PC-3 (cell line): ENCODE measurements at regions of chr2 and their contacts with region 1.

Region 1: DNA sequence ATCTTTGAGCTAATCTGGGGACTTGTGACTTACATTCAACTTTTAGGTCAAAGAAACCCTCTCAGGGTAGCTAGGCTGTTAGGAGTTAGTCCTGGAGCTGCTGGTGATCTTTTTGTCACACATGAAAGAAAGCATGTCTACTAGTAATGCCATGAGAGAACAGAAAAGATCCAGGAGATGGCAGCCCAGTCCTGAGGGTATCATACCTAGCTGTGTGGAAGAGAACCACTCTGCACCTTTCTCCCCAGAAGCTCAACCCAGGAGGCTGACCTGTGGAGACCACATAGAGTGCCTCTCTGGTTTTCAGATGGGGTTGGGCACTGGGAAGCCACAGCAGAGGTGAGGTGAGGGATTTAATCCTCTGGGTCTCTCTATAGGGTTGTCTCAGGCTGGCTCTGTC is 460.2 kb upstream of the UBE2E3 start:
- DNase-seq: peak; percentile 56
- ATAC-seq: peak; percentile 32
- H3K4me3 ChIP-seq: no peak overlapping the region
- H3K27ac ChIP-seq: peak overlapping the region; percentile 96
- H3K4me1 ChIP-seq: peaks cover 73% of the 10 kb centered on the region
- H3K27me3 ChIP-seq: no peaks in the 10 kb centered on the region
- CTCF ChIP-seq: peak; percentile 52

Region 2: DNA sequence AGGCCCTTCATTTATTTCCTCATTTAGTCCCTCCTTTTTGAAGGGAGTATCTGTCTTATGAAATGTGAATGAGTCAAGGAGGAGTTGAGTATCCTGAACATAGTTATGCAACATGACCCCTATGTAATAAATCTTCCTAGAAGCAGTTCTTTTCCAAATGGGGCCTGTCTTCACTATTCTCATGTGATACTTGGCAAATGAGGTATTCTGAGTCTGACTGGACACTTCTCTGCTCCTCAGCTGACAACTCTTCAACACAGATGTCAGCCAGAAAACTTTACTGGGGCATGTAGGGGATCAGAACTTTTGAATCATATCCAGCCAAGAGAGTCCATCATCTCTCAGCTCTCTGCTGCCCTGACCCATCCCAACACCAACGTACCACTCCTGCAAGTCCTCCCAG is 950.4 kb before region 1 on chr2:
- CTCF ChIA-PET with region 1: no interaction called
- POLR2A ChIA-PET with region 1: no interaction called
- intact Hi-C with region 1: no loop called
- DNase-seq: peak; percentile 68
- ATAC-seq: no peak
- H3K4me3 ChIP-seq: no peak overlapping the region
- H3K27ac ChIP-seq: no peak overlapping the region
- H3K4me1 ChIP-seq: peaks cover 27% of the 10 kb centered on the region
- H3K27me3 ChIP-seq: no peaks in the 10 kb centered on the region
- CTCF ChIP-seq: no peak

Region 3: DNA sequence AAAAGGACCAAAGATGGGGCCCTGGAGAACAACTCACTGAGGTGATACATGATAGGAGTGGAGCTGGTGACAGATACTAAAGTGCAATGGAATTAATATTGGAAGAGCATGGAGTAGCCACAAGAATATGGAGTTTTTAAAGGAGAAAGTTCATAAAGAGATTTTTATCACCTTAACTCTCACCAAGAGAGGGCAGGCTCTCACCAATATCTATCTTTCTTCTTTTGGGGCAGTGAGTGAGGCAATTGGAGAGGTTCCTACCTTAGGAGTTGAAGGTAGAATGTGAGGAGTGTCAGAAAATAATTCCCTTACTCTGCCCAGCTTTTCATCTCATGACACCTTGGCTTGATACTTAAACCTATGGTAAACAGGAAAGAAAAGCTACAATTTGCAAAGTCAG is 279.4 kb before region 1 on chr2:
- CTCF ChIA-PET with region 1: interaction called, 7 read pairs
- POLR2A ChIA-PET with region 1: no interaction called
- intact Hi-C with region 1: loop called (anchors 2 kb)
- DNase-seq: peak; percentile 65
- ATAC-seq: peak; percentile 59; the same call in 1 of the 2 replicates
- H3K4me3 ChIP-seq: no peak overlapping the region
- H3K27ac ChIP-seq: no peak overlapping the region
- H3K4me1 ChIP-seq: no peaks in the 10 kb centered on the region
- H3K27me3 ChIP-seq: no peaks in the 10 kb centered on the region
- CTCF ChIP-seq: peak; percentile 71

Region 4: DNA sequence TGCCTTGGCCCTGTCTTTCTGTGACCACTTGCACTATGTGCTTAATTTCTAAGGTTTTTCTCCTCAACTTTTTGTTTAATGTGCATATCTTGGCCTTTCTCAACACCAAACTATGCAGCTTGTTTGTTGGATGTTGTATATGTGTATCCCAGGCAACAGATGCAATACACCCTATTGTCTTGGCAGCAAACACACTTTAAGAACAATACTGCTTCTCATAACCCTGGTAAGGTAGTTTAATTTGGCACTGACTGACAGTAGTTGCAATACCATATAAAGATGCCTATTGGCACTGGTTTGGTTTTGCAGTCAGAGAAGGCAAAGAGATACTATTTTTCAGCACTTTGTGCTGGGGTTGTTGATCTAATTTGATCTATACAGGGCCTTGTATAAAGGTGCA is 152.4 kb before region 1 on chr2:
- CTCF ChIA-PET with region 1: no interaction called
- POLR2A ChIA-PET with region 1: no interaction called
- intact Hi-C with region 1: loop called (anchors 5 kb)
- DNase-seq: peak; percentile 68
- ATAC-seq: peak; percentile 93
- H3K4me3 ChIP-seq: no peak overlapping the region
- H3K27ac ChIP-seq: peak overlapping the region; percentile 71
- H3K4me1 ChIP-seq: peaks cover 25% of the 10 kb centered on the region
- H3K27me3 ChIP-seq: no peaks in the 10 kb centered on the region
- CTCF ChIP-seq: no peak

Region 5: DNA sequence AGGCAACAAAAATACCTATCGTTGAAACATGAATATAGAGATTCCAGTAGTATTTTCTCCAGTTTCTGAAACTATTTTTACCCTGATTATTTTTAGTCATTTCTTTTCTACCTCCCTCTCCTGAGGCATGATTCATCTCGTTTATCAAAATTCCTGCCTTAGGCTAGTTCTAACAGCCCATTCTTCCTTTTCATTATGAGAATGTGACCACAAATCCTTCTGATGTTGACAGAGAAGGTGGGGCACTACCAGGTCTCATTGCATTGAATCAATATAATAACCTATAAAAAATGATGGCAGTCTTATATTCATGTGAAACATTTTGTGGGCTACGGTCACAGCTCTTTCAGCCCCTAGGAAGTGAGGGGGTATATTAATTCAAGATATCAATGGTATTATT is 53.8 kb after region 1 on chr2:
- CTCF ChIA-PET with region 1: no interaction called
- POLR2A ChIA-PET with region 1: no interaction called
- intact Hi-C with region 1: loop called (anchors 1 kb)
- DNase-seq: peak; percentile 97
- ATAC-seq: peak; percentile 89
- H3K4me3 ChIP-seq: no peak overlapping the region
- H3K27ac ChIP-seq: peak overlapping the region; percentile 73
- H3K4me1 ChIP-seq: peaks cover 48% of the 10 kb centered on the region
- H3K27me3 ChIP-seq: no peaks in the 10 kb centered on the region
- CTCF ChIP-seq: no peak

Region 6: GRCh38 chr2:180722551-180723239 is 202.5 kb after region 1 on chr2:
- CTCF ChIA-PET with region 1: interaction called, 4 read pairs
- POLR2A ChIA-PET with region 1: interaction called, 4 read pairs
- intact Hi-C with region 1: loop called (anchors 2 kb)
- DNase-seq: peak; percentile 77
- ATAC-seq: peak; percentile 84
- H3K4me3 ChIP-seq: no peak overlapping the region
- H3K27ac ChIP-seq: peak overlapping the region; percentile 71
- H3K4me1 ChIP-seq: peaks cover 27% of the 10 kb centered on the region
- H3K27me3 ChIP-seq: no peaks in the 10 kb centered on the region
- CTCF ChIP-seq: no peak

Region 7: GRCh38 chr2:181077128-181077709 is 557.0 kb after region 1 on chr2:
- CTCF ChIA-PET with region 1: no interaction called
- POLR2A ChIA-PET with region 1: no interaction called
- intact Hi-C with region 1: loop called (anchors 5 kb)
- DNase-seq: peak; percentile 74
- ATAC-seq: peak; percentile 89
- H3K4me3 ChIP-seq: no peak overlapping the region
- H3K27ac ChIP-seq: no peak overlapping the region
- H3K4me1 ChIP-seq: no peaks in the 10 kb centered on the region
- H3K27me3 ChIP-seq: no peaks in the 10 kb centered on the region
- CTCF ChIP-seq: peak; percentile 82